ENCODE measurements at regions of chr13 and their contacts with region 1.

Region 1: GRCh38 chr13:28324181-28324789 is 170.6 kb downstream of the FLT1 start:
- ATAC-seq: peak in 4 of 8 experiments; percentile 45 to 93 (median 88)
- H3K4me3 ChIP-seq: no peak overlapping the region
- H3K27ac ChIP-seq: no peak overlapping the region
- H3K4me1 ChIP-seq: no peaks in the 10 kb centered on the region

Region 2: GRCh38 chr13:28047757-28048388 is 276.4 kb before region 1 on chr13:
- in situ Hi-C with region 1: no loop called
- ATAC-seq: no peak
- H3K4me3 ChIP-seq: no peak overlapping the region
- H3K27ac ChIP-seq: no peak overlapping the region
- H3K4me1 ChIP-seq: no peaks in the 10 kb centered on the region

Region 3: DNA sequence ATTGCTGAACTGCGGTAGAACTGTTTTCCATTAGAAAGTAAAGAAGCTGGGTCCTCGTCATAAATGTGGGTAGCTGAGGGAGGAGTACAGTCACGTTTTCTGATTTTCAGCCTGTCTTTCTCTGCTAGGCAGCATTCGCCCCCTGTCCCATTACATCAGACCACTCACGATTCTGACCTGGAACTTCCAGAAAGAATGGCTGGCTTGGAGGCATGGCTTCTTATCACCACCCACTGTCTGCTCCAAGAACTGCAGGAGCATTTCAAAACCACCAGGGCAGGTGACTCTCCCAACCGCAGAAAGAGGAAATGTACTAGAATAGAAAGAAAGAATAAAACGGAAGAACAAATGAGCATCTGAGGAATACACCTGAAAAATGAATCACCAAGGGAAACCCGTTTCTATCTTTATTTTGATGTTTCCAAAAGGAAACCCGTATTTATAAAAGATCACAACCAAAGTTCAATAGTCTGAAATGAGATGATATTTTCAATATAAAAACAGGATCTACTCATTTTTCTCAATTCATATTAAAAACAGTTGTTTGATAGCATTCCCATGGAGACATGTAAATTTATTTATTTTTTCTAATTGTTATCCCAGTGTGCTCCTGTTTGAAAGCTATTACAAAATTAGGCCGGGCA is 312.5 kb after region 1 on chr13:
- in situ Hi-C with region 1: loop called in 3 of 9 experiments (anchors 25 kb)
- ATAC-seq: peak in 4 of 8 experiments; percentile 75 to 88 (median 86)
- H3K4me3 ChIP-seq: no peak overlapping the region
- H3K27ac ChIP-seq: no peak overlapping the region
- H3K4me1 ChIP-seq: no peaks in the 10 kb centered on the region

Region 4: DNA sequence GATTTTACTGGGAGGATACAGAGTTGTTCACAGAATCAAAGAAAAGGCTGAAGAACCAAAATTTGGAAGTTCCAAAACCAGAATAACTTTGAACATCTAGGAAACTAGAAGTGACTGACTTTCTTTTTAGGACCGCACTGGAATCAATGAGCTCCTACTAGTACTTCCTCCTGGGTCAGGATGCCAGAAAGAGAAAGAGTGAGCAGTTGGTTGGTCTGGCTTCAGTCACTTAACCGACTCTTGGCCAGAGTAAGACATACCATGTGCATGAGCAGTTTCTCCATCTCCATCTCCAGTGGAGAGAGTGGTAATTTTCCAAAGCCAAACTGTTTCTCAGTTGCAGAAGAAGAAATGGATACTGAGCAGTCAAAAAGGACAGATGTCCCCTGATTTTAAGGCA is 468.7 kb after region 1 on chr13:
- in situ Hi-C with region 1: loop called in 3 of 9 experiments (anchors 25 kb)
- ATAC-seq: peak in 2 of 8 experiments; percentile 18 to 60
- H3K4me3 ChIP-seq: no peak overlapping the region
- H3K27ac ChIP-seq: no peak overlapping the region
- H3K4me1 ChIP-seq: peaks cover 0 to 2% of the 10 kb centered on the region in 2 donors

Measured in motor neuron (in vitro differentiated cells).